ENCODE measurements at regions of chr15 and their contacts with region 1.

Region 1: GRCh38 chr15:39171944-39172368 is 408.9 kb upstream of the THBS1 start:
- DNase-seq: peak; percentile 96
- H3K4me3 ChIP-seq: no peak overlapping the region
- H3K27ac ChIP-seq: peak overlapping the region; percentile 83
- H3K4me1 ChIP-seq: peaks cover 27% of the 10 kb centered on the region
- H3K27me3 ChIP-seq: no peaks in the 10 kb centered on the region

Region 2: GRCh38 chr15:39226169-39226937 is 54.4 kb after region 1 on chr15:
- in situ Hi-C with region 1: no loop called
- DNase-seq: no peak
- H3K4me3 ChIP-seq: no peak overlapping the region
- H3K27ac ChIP-seq: no peak overlapping the region
- H3K4me1 ChIP-seq: peaks cover 8% of the 10 kb centered on the region
- H3K27me3 ChIP-seq: no peaks in the 10 kb centered on the region

Region 3: DNA sequence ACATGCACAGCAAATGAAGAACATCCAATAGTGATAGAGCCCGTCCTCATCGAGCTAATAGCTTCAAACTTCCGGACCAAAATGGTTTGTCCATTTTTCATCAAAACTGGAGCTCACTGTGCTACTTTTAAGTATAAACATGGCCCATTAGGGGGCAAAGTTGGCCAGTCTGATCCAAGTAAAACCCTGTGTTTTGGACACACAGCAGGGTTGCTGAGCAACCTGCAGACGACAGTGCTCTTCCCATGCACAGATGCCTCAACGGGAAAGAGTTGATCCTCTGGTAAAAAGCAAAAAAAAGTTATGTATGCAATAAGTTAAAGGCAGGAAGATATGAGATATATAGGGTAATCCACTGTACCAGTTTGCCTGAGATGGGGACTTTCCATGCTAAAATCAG is 165.0 kb after region 1 on chr15:
- in situ Hi-C with region 1: no loop called
- DNase-seq: peak; percentile 9
- H3K4me3 ChIP-seq: no peak overlapping the region
- H3K27ac ChIP-seq: no peak overlapping the region
- H3K4me1 ChIP-seq: peaks cover 12% of the 10 kb centered on the region
- H3K27me3 ChIP-seq: no peaks in the 10 kb centered on the region

Region 4: GRCh38 chr15:39362821-39363561 is 191.0 kb after region 1 on chr15:
- in situ Hi-C with region 1: loop called (anchors 10 kb)
- DNase-seq: peak; percentile 90
- H3K4me3 ChIP-seq: no peak overlapping the region
- H3K27ac ChIP-seq: peak overlapping the region; percentile 91
- H3K4me1 ChIP-seq: peaks cover 95% of the 10 kb centered on the region
- H3K27me3 ChIP-seq: no peaks in the 10 kb centered on the region

Measured in GM23248 (cell line).